K562 (cell line): ENCODE measurements at regions of chrX and their contacts with region 1.

Region 1: DNA sequence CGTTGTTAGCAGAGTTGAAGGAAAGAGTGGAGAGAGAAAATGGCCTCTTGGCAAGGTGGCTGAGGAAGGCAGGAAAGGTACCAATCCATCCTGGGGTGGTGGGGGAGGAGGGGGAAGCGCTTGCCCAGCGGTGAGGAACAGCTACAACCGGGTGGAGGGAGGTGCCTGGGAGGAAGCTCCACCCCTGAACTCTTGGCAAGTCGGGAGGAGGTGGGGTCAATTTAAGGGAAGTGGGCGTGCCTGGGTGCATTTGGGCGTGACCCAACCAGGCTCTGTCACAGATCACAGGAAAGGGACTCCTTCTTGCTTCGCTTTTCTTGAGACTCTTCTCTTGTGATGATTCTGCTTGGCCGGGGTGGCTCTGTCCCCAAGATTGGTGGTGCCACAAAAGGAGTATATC is 41.7 kb downstream of the BCORL1 start:
- DNase-seq: peak; percentile 91 to 94 (median 92)
- ATAC-seq: peak; percentile 100
- H3K4me3 ChIP-seq: no peak overlapping the region
- H3K27ac ChIP-seq: peak overlapping the region; percentile 51; the same call in 2 of the 3 replicates
- H3K4me1 ChIP-seq: peaks cover 7 to 10% of the 10 kb centered on the region in 2 experiments; a peak in 4 of 5 replicates
- H3K27me3 ChIP-seq: no peaks in the 10 kb centered on the region
- CTCF ChIP-seq: no peak
- EP300 ChIP-seq: no peak
- POLR2A ChIP-seq: no peak
- RAD21 ChIP-seq: no peak

Region 2: GRCh38 chrX:129925305-129926092 is 98.6 kb before region 1 on chrX:
- CTCF ChIA-PET with region 1: interaction called, 3 read pairs
- POLR2A ChIA-PET with region 1: interaction called, 6 read pairs
- in situ Hi-C with region 1: no loop called
- intact Hi-C with region 1: loop called (anchors 1 kb)
- DNase-seq: peak; percentile 36 to 75 (median 50)
- ATAC-seq: peak; percentile 90
- H3K4me3 ChIP-seq: no peak overlapping the region
- H3K27ac ChIP-seq: no peak overlapping the region
- H3K4me1 ChIP-seq: no peaks in the 10 kb centered on the region
- H3K27me3 ChIP-seq: no peaks in the 10 kb centered on the region
- CTCF ChIP-seq: peak; percentile 59 to 78 (median 70)
- EP300 ChIP-seq: no peak
- POLR2A ChIP-seq: 0 out of 2 replicates have a peak, but pooled peaks have one; percentile 19
- RAD21 ChIP-seq: peak; percentile 80

Region 3: DNA sequence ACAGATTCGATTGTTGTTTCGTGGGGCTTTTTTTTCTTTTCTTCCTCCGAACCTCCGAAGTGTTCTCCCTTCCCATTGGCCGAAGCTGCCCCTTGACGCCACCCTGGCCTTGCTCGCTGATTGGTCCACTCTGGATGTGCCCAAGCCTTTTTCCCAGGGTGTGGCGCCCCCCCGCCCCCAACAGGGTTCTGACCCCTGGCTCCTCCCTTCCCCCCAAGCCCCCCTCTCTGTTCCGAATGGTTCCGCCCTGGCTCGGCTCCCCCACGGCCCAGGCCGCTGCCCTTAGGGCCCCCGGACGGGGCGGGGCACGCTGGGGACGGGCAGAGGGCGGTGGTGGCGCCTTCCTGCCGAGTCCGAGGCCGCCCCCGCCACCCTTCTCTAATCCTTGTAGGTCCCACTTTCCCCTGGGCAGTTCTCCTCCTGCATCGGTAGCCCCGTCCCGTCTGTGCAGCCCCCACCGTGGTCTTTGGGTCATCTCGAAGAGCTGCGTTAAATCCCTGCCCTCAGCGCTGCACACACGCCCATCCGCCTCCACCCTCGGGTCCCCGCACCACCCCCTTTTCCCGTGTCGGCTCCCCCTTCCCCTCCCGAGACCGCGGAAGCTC is 92.6 kb before region 1 on chrX:
- CTCF ChIA-PET with region 1: no interaction called
- POLR2A ChIA-PET with region 1: interaction called, 3 read pairs
- in situ Hi-C with region 1: no loop called
- intact Hi-C with region 1: loop called (anchors 1 kb)
- DNase-seq: peak; percentile 90 to 94 (median 92)
- ATAC-seq: peak; percentile 90
- H3K4me3 ChIP-seq: peak overlapping the region; percentile 65
- H3K27ac ChIP-seq: peak overlapping the region; percentile 82
- H3K4me1 ChIP-seq: peaks cover 4 to 19% of the 10 kb centered on the region in 2 experiments; a peak in 3 of 5 replicates
- H3K27me3 ChIP-seq: no peaks in the 10 kb centered on the region
- CTCF ChIP-seq: no peak
- EP300 ChIP-seq: no peak
- POLR2A ChIP-seq: peak; percentile 67
- RAD21 ChIP-seq: no peak

Region 4: GRCh38 chrX:129982274-129983251 is 41.6 kb before region 1 on chrX and contains the start of gene BCORL1:
- CTCF ChIA-PET with region 1: no interaction called
- POLR2A ChIA-PET with region 1: interaction called, 3 read pairs
- in situ Hi-C with region 1: no loop called
- intact Hi-C with region 1: loop called (anchors 2 kb)
- DNase-seq: peak; percentile 87 to 96 (median 92)
- ATAC-seq: peak; percentile 94
- H3K4me3 ChIP-seq: no peak within 1 kb of the TSS
- H3K27ac ChIP-seq: peak within 1 kb of the TSS; percentile 61
- H3K4me1 ChIP-seq: peaks cover 10 to 29% of the 10 kb centered on the region in 2 experiments; a peak in 4 of 5 replicates
- H3K27me3 ChIP-seq: no peaks in the 10 kb centered on the region
- CTCF ChIP-seq: peak; percentile 23 to 26 (median 25); a peak in 2 of 6 replicates
- EP300 ChIP-seq: peak; percentile 31; the same call in 1 of the 2 replicates
- POLR2A ChIP-seq: peak; percentile 95
- RAD21 ChIP-seq: no peak
- polyA plus RNA-seq, gene BCORL1: 0.48 to 0.55 TPM

Region 5: GRCh38 chrX:130347321-130347720 is 323.2 kb after region 1 on chrX:
- CTCF ChIA-PET with region 1: no interaction called
- POLR2A ChIA-PET with region 1: no interaction called
- in situ Hi-C with region 1: no loop called
- intact Hi-C with region 1: no loop called
- DNase-seq: no peak
- ATAC-seq: no peak
- H3K4me3 ChIP-seq: no peak overlapping the region
- H3K27ac ChIP-seq: no peak overlapping the region
- H3K4me1 ChIP-seq: no peaks in the 10 kb centered on the region
- H3K27me3 ChIP-seq: no peaks in the 10 kb centered on the region
- CTCF ChIP-seq: no peak
- EP300 ChIP-seq: no peak
- POLR2A ChIP-seq: no peak
- RAD21 ChIP-seq: no peak